ENCODE measurements at regions of chr10 and their contacts with region 1.

Region 1: DNA sequence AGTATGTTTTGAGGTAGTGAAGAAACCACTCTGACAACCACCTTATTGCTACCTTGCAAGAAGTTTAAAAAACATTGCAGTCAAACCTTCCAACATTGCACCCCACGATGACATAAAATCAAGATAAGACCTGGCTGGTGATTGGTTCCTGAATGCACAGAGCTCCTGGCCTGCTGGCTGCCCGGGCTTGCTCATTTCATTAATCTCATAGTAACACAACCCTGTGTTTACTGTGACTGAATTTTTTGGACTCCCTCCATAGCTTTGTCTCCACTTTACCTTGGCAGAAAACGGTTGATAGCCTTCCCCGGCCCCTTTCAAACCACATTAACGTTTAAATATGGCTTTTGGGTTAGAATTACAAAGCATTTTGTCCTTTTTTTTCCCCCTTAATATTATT is 27.5 kb downstream of the VWA2 start:
- DNase-seq: no peak
- ATAC-seq: peak; percentile 45; the same call in 1 of the 2 replicates
- H3K4me3 ChIP-seq: no peak overlapping the region
- H3K27ac ChIP-seq: no peak overlapping the region
- H3K4me1 ChIP-seq: peaks cover under 1% of the 10 kb centered on the region; the same call in 1 of the 2 replicates
- H3K27me3 ChIP-seq: no peaks in the 10 kb centered on the region
- CTCF ChIP-seq: no peak

Region 2: GRCh38 chr10:114246679-114247305 is 19.7 kb before region 1 on chr10:
- CTCF ChIA-PET with region 1: no interaction called
- POLR2A ChIA-PET with region 1: interaction called, 11 read pairs
- in situ Hi-C with region 1: no loop called
- intact Hi-C with region 1: no loop called
- DNase-seq: no peak
- ATAC-seq: no peak
- H3K4me3 ChIP-seq: no peak overlapping the region
- H3K27ac ChIP-seq: no peak overlapping the region
- H3K4me1 ChIP-seq: peaks cover 5% of the 10 kb centered on the region
- H3K27me3 ChIP-seq: peaks cover 13% of the 10 kb centered on the region
- CTCF ChIP-seq: no peak

Measured in Panc1 (cell line).